ENCODE measurements at regions of chr11 and their contacts with region 1.

Region 1: DNA sequence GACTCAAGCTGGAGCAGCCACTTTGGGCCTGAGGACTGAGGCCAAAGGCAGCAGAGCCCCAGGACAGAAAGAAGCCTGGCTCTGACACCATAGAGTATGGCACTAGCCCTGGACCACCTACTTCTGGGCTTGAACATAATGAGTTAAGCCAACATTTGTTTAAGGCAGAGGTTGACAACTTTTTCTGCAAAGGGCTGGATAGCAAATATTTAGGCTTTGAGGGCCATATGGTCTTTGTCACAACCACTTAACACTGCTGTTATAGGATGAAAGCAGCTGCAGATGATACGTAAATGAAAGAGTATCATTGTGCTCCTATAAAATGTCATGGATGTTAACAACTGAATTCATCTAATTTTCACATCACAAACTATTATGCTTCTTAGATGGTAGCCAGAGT is 16.6 kb downstream of the OSBP start:
- DNase-seq: no peak
- ATAC-seq: no peak

Region 2: GRCh38 chr11:59641156-59641555 is 42.2 kb after region 1 on chr11:
- intact Hi-C with region 1: loop called in 1 of 2 experiments (anchors 10 kb)
- DNase-seq: no peak
- ATAC-seq: peak; percentile 46